Heart right ventricle (tissue), 16 donors: ENCODE measurements at regions of chr6 and their contacts with region 1.

Region 1: DNA sequence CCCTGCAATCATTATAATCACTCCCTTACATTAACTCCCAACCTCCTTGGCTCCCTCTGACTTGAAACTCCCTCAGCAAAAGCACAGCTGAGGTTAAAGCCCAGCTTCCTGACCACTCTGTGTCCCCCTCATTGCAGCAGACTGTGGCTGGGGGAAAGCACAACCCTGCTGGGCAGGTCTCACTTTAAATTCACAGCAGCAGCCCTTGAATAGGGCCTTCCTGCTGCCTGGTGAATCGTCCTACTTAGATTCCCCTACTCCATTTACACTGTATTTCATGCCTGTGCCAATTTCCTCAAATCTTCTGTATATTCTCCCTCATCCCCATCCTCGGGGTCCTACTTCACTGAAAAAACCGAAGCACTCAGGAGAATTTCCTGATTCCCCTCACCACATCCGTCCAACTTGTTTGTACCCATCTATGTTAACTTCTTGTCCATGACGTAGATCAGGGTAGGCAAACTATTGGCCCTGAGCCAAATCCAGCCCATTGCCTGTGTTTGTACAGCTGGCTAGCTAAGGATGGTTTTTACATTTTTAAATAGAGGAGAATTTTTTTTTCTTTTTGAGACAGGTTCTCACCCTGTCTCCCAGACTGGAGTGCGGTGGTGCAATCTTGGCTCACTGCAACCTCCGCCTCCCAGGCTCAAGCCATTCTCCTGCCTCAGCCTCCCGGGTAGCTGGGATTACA is 31.5 kb upstream of the GCM1 start:
- DNase-seq: peak; percentile 25 to 53
- ATAC-seq: peak in 7 of 8 donors; percentile 33 to 79 (median 58)
- H3K4me3 ChIP-seq: no peak overlapping the region
- H3K27ac ChIP-seq: peak overlapping the region in 6 of 10 donors; percentile 7 to 57 (median 26)
- H3K4me1 ChIP-seq: peaks cover 0 to 10% (median 0%) of the 10 kb centered on the region in 9 donors
- H3K27me3 ChIP-seq: no peaks in the 10 kb centered on the region
- CTCF ChIP-seq: no peak

Region 2: GRCh38 chr6:53250176-53251032 is 70.3 kb after region 1 on chr6:
- intact Hi-C with region 1: loop called in 1 of 10 experiments (anchors 5 kb)
- DNase-seq: no peak
- ATAC-seq: peak in 7 of 8 donors; percentile 28 to 64 (median 50)
- H3K4me3 ChIP-seq: no peak overlapping the region
- H3K27ac ChIP-seq: peak overlapping the region in 8 of 10 donors; percentile 16 to 67 (median 44)
- H3K4me1 ChIP-seq: peaks cover 0 to 19% (median 3%) of the 10 kb centered on the region in 9 donors
- H3K27me3 ChIP-seq: no peaks in the 10 kb centered on the region
- CTCF ChIP-seq: no peak

Region 3: DNA sequence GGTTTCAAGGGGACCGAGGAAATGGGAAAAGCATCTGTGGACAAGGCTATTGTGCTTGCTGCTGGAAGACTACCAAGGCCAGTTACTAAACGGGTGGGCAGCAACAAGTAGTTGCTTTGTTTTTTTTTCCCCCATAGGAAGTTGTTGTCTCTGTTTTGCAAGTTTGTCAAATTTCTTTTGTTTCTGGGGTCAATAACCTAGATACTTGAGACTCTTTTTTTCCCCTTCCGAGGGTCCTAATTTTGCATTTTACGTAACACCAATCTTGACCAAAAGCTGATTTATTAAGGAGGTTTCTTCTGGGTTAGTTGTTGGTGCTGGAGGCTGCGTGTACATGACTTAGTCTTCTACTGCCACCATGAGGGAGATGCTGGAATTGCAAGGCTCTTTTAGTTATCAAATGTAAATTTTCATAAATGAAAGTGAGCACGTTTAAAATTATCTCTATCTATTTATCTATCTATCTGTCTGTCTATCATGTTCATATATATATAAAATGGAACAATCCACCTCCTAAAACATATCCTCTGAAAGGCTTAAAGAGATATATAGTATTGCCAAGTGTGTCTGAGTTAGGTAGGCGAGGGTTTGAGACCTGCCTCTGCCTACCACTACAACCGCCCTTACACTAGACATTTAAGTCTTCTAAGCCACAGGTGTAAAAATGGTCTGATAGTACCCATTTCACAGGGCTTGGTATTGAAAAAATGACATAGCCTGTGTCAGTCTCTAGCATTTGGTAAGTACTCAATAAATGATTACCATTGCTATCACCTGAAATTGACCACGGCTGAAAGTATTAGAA is 304.6 kb after region 1 on chr6:
- intact Hi-C with region 1: no loop called
- DNase-seq: peak in 1 of 2 donors; percentile 82
- ATAC-seq: peak; percentile 58 to 93 (median 84)
- H3K4me3 ChIP-seq: peak overlapping the region in 6 of 10 donors; percentile 4 to 31 (median 14)
- H3K27ac ChIP-seq: peak overlapping the region; percentile 6 to 88 (median 71)
- H3K4me1 ChIP-seq: peaks cover 2 to 38% (median 22%) of the 10 kb centered on the region in 9 donors
- H3K27me3 ChIP-seq: peaks cover 0 to 18% (median 0%) of the 10 kb centered on the region in 7 donors
- CTCF ChIP-seq: peak; percentile 84 to 99 (median 97)